Endothelial cell of umbilical vein (primary cell): ENCODE measurements at regions of chr7 and their contacts with region 1.

Region 1: DNA sequence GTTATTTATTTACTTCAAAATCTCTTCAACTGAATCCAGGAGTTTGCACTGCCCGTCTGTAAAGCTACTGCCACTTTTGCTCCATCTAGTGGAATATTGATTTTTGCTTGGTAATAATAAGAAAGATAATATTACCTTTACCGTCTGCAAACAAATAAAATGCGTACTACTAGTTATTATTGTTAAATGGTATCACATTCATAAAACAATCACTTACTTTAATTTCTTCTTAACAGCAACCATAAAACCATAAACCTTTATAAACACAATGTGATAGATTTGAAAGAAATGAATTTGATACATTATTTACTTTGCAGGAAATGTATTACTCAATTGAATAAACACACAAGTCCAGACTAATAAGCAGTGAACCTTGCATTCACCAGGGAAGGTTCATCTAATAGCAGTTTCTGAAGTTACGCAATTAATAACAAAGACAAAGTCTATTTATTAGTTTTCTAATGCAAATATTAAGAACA is 6.4 kb downstream of the AGMO start:
- DNase-seq: peak; percentile 73
- H3K4me3 ChIP-seq: peak overlapping the region in 2 of 3 experiments; percentile 12 to 32
- H3K27ac ChIP-seq: peak overlapping the region; percentile 27
- H3K4me1 ChIP-seq: peaks cover 36% of the 10 kb centered on the region
- H3K27me3 ChIP-seq: no peaks in the 10 kb centered on the region
- CTCF ChIP-seq: peak in 1 of 2 donors; percentile 6
- POLR2A ChIP-seq: no peak

Region 2: DNA sequence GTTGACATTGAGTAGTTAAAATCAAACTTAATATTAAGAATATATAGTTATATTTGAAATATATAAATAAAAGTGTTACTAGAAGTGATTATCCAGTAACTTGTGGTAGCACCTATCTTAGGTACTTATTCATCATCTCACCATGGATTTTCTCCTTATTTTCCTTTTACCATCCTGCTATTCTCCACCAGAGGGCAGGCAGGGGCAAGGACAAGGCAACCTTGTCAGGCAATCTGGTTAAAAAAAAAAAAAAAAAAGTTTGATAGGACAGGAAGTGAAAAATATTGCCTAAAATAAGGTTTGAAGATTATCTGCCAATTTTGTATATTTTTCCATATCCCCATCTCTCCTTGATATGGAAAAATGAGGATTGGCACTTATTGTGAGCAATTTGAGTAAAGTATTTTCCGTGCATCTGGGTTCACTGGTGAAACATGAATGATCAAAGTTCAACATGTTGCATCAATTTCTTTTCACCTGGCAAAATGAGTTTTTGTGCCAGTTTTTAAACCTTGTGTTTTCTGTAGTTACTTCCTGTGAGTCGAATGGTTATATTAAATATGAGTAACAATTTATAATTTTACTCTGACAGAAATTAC is 250.3 kb before region 1 on chr7:
- CTCF ChIA-PET with region 1: no interaction called
- POLR2A ChIA-PET with region 1: no interaction called
- dilution Hi-C with region 1: no loop called
- intact Hi-C with region 1: loop called (anchors 5 kb)
- DNase-seq: peak; percentile 65
- H3K4me3 ChIP-seq: no peak overlapping the region
- H3K27ac ChIP-seq: no peak overlapping the region
- H3K4me1 ChIP-seq: no peaks in the 10 kb centered on the region
- H3K27me3 ChIP-seq: no peaks in the 10 kb centered on the region
- CTCF ChIP-seq: peak; percentile 61 to 66
- POLR2A ChIP-seq: no peak

Region 3: DNA sequence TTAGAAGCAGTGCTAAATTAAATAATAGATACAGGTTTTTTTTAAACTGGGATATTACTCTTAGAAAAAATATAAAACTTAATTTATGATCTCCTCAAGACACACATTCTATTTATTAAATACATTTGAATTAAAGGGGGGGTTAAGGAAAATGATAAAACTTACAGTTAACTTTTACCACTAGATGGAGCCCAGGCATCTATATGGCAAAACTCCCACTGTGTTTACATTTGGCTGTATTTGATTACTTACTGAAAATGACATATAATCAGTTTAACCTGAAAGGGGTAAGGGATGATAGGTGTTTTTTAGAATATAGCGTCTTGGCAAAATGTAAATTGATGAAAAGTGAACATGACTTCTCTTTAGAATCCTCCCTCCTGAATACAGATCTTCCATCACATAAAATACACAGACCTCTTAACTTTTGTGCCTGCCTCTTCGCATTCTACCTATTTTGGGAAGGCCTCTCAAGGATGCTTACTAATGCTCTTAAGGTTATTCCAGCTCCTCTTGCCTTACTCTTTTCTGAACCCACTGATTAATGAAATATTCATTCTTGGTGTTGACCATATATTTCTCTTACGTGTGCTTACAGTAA is 229.3 kb before region 1 on chr7:
- CTCF ChIA-PET with region 1: interaction called, 9 read pairs
- POLR2A ChIA-PET with region 1: no interaction called
- dilution Hi-C with region 1: no loop called
- intact Hi-C with region 1: loop called (anchors 1 kb)
- DNase-seq: peak; percentile 72
- H3K4me3 ChIP-seq: no peak overlapping the region
- H3K27ac ChIP-seq: no peak overlapping the region
- H3K4me1 ChIP-seq: no peaks in the 10 kb centered on the region
- H3K27me3 ChIP-seq: no peaks in the 10 kb centered on the region
- CTCF ChIP-seq: peak; percentile 33 to 45
- POLR2A ChIP-seq: no peak

Region 4: GRCh38 chr7:16268821-16269768 is 713.7 kb after region 1 on chr7:
- CTCF ChIA-PET with region 1: no interaction called
- POLR2A ChIA-PET with region 1: no interaction called
- dilution Hi-C with region 1: no loop called
- intact Hi-C with region 1: no loop called
- DNase-seq: no peak
- H3K4me3 ChIP-seq: no peak overlapping the region
- H3K27ac ChIP-seq: no peak overlapping the region
- H3K4me1 ChIP-seq: no peaks in the 10 kb centered on the region
- H3K27me3 ChIP-seq: no peaks in the 10 kb centered on the region
- CTCF ChIP-seq: no peak
- POLR2A ChIP-seq: no peak